OCI-LY7 (cell line): ENCODE measurements at regions of chr2 and their contacts with region 1.

Region 1: GRCh38 chr2:160687629-160688028 is 194.0 kb upstream of the RBMS1 start:
- DNase-seq: no peak
- H3K4me3 ChIP-seq: no peak overlapping the region
- H3K27ac ChIP-seq: no peak overlapping the region
- H3K4me1 ChIP-seq: no peaks in the 10 kb centered on the region
- CTCF ChIP-seq: no peak

Region 2: GRCh38 chr2:160324161-160324800 is 363.3 kb before region 1 on chr2:
- CTCF ChIA-PET with region 1: no interaction called
- POLR2A ChIA-PET with region 1: no interaction called
- intact Hi-C with region 1: no loop called
- DNase-seq: peak; percentile 49
- H3K4me3 ChIP-seq: no peak overlapping the region
- H3K27ac ChIP-seq: no peak overlapping the region
- H3K4me1 ChIP-seq: peaks cover 6% of the 10 kb centered on the region
- CTCF ChIP-seq: peak; percentile 88

Region 3: DNA sequence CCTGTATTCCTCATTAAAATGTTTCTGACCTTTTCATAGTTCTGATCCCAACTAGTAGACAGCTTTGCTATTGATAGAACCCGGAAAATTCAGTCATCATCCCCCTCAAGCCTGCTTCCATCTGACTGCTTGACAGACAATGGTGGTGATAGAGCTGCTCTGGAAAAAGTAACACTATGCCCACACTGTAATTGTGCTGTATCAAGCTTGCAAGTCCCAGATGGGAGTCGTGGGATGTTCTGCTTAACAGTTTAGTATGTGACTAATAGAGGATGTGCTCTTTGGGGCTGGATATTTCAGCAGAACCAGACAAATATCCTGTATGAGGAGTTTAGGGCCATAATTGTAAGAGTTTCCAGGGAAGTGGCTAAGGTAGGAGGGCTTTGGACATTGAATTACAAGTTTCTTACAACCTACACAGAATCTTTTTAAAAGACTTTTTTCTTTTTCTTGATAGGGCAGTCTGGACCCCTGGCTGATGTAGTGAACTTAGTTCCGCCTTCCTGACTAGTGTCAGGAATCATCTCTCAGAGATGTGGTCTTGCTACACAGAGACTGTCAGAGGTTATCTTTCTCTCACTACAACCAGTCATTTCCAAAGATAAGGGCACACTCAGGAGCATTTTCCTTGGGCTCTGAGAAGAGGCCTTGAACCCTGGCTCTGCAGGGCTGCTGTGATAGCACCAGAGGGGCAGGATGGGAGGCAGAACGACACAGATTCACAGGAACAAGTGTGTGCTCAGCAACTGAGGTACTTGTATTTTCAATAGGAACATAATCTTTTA is 36.0 kb before region 1 on chr2:
- CTCF ChIA-PET with region 1: no interaction called
- POLR2A ChIA-PET with region 1: interaction called, 11 read pairs
- intact Hi-C with region 1: no loop called
- DNase-seq: no peak
- H3K4me3 ChIP-seq: no peak overlapping the region
- H3K27ac ChIP-seq: no peak overlapping the region
- H3K4me1 ChIP-seq: no peaks in the 10 kb centered on the region
- CTCF ChIP-seq: no peak

Region 4: DNA sequence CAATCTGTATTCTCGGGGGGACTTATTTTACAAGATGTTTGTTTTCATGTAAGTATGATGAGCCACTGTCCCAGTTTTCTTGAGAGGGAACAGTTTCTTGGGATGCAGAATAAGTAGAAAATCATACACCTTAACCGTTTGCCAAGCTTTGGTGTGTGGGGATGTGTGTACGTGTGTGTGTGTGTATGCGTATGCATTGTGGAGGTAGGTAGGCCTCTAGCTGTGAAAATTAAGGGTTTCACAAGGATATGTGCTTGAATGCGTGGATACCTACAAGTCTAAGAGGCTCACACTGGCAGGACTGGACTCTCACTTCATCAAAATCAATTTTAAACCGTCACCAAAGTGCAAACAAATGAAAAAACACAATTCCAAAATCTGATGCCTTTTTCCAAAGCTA is 10.2 kb after region 1 on chr2:
- CTCF ChIA-PET with region 1: interaction called, 3 read pairs
- POLR2A ChIA-PET with region 1: interaction called, 12 read pairs
- intact Hi-C with region 1: no loop called
- DNase-seq: no peak
- H3K4me3 ChIP-seq: no peak overlapping the region
- H3K27ac ChIP-seq: no peak overlapping the region
- H3K4me1 ChIP-seq: peaks cover 8% of the 10 kb centered on the region
- CTCF ChIP-seq: no peak